Pancreas (tissue), 10 donors: ENCODE measurements at regions of chr11 and their contacts with region 1.

Region 1: DNA sequence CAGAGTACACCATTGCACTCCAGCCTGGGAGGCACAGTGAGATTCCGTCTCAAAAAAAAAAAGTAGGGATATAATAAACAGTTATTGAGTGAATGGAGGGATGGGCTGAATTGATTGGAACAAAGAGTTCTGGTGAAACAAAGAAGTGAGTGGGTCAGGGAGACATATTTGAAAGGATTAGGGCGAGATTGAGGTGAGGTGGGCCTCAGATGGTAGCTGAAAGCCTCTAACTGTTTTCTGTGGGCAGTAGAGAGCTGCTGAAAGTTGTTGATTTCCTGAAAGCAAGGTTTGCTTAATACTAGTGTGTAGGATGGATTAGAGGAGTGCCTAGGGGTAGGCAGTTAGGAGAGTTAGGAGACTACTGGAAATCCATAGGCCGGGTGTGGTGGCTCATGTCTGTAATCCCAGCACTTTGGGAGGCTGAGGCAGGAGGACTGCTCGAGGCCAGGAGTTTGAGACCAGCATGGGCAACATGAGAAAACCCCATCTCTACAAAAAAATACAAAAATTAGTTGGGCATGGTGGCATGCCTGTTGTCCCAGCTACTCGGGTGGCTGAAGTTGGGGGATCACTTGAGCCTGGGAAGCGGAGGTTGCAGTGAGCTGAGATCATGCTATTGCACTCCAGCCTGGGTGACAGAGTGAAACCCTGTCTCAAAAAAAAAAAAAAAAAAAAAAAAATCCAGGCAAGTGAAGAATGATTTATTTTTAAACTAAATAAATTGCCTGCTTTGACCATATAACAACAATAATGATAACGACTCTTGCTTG is 41.4 kb upstream of the PTPRJ start:
- DNase-seq: no peak
- ATAC-seq: no peak
- H3K4me3 ChIP-seq: no peak overlapping the region
- H3K27ac ChIP-seq: no peak overlapping the region
- H3K4me1 ChIP-seq: no peaks in the 10 kb centered on the region
- H3K27me3 ChIP-seq: no peaks in the 10 kb centered on the region
- CTCF ChIP-seq: no peak

Region 2: GRCh38 chr11:48109046-48109666 is 170.2 kb after region 1 on chr11:
- intact Hi-C with region 1: loop called in 2 of 3 experiments (anchors 5 kb)
- DNase-seq: no peak
- ATAC-seq: peak; percentile 65 to 77 (median 73)
- H3K4me3 ChIP-seq: peak overlapping the region in 2 of 4 donors; percentile 20 to 33
- H3K27ac ChIP-seq: peak overlapping the region in 2 of 4 donors; percentile 47 to 63
- H3K4me1 ChIP-seq: peaks cover 0 to 11% (median 4%) of the 10 kb centered on the region in 3 donors
- H3K27me3 ChIP-seq: no peaks in the 10 kb centered on the region
- CTCF ChIP-seq: no peak